ENCODE measurements at regions of chr2 and their contacts with region 1.

Region 1: DNA sequence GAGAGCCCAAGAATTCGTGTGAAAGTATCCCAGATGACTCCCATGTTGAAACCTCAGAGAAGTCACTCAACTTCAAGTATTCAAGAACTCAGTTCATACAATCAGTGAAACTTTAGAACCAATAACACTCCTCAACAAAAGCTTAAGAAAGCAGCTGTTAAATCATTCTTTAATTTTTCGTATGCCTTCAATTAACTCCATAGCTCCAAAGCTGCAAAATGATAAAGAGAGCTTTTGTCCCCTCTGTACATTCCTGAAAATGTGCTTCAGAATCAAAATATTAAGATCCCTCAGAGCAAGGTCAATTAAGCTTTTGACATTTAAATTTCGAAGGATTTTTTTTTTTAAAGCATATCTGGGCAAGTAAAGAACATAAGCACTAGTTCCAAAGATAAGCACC is 4.7 kb downstream of the COBLL1 start:
- DNase-seq: no peak
- H3K4me3 ChIP-seq: no peak overlapping the region
- H3K27ac ChIP-seq: no peak overlapping the region
- H3K4me1 ChIP-seq: peaks cover 3% of the 10 kb centered on the region
- CTCF ChIP-seq: no peak

Region 2: DNA sequence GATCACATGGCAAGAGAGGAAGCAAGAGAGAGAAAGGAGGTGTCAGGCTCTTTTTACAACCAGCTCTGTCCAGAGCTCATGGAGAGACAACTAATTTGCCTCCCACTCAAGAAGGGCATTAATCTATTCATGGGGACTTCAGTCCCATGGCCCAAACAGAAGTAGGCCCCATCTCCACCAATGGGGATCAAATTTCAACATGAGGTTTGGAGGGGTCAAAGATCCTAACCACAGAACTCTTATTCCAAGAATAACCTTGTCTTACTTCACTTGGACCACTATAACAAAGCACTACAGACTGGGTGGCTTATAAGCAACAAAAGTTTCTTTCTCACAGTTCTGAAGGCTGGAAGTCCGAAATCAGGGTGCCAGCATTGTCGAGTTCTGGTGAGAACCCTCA is 247.4 kb before region 1 on chr2:
- CTCF ChIA-PET with region 1: no interaction called
- POLR2A ChIA-PET with region 1: no interaction called
- intact Hi-C with region 1: no loop called
- DNase-seq: no peak
- H3K4me3 ChIP-seq: no peak overlapping the region
- H3K27ac ChIP-seq: no peak overlapping the region
- H3K4me1 ChIP-seq: no peaks in the 10 kb centered on the region
- CTCF ChIP-seq: no peak

Region 3: GRCh38 chr2:164826293-164827243 is 10.3 kb before region 1 on chr2:
- CTCF ChIA-PET with region 1: no interaction called
- POLR2A ChIA-PET with region 1: interaction called, 17 read pairs
- intact Hi-C with region 1: no loop called
- DNase-seq: no peak
- H3K4me3 ChIP-seq: no peak overlapping the region
- H3K27ac ChIP-seq: no peak overlapping the region
- H3K4me1 ChIP-seq: no peaks in the 10 kb centered on the region
- CTCF ChIP-seq: no peak

Region 4: DNA sequence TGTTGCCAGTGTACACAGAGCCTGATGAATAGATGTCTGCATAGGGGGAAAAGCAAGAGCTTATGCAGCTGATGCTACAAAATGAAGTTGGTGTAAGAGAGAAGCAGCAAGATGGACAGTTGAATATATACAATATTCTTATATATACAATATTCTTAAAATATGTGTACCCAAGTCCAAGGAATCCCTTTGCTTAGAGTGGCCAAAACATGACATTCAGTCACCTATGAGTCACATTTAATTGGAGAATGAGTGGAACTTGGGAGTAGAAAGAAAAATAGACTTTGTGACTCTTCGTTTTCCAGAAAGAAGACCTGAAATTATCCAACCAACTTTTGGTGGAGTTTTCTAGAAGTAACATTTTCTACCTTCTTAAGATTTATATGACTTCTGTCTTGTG is 1457.1 kb after region 1 on chr2:
- CTCF ChIA-PET with region 1: no interaction called
- POLR2A ChIA-PET with region 1: no interaction called
- intact Hi-C with region 1: no loop called
- DNase-seq: no peak
- H3K4me3 ChIP-seq: no peak overlapping the region
- H3K27ac ChIP-seq: no peak overlapping the region
- H3K4me1 ChIP-seq: no peaks in the 10 kb centered on the region
- CTCF ChIP-seq: no peak